ENCODE measurements at regions of chr12 and their contacts with region 1.

Region 1: DNA sequence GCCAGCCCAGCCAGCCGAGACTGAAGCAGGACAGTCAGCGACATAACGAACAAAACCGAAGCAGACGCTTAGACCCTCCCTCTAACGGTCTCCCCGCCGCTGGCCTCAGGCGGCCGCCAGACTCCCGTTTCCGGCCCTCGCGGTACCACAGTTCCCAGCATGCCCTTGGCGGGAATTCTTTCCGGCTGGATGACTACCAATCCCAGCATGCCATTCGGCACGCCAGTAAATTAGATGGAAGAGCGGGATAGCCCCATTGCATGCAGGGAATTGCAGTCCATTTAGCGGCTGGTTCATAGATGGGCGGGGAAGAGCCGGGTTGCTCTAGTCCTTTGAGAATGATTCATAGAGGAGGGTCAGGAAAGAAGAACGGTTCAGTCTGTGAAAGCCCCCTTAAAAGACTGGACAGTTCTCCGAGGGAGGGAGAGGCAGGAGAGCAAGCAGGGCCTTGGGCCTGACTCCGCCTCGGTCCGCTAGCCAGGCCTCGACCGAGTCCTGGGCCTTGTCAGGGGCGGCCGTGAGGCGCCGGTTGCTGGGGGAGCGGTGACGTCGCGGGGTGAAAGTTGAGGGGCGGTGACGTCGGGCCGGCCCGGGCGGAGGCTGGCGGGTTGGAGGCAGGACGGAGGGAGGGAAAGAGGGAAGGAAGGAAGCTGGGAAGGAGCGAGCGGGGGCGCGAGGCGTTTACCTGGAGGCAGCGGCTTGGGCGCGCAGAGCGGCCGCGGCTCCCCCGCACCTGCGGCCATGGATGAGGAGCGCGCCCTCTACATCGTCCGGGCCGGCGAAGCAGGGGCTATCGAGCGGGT is at the start of gene RIC8B:
- DNase-seq: peak; percentile 95
- ATAC-seq: peak; percentile 97
- total RNA-seq, gene RIC8B: 25.4 TPM

Region 2: GRCh38 chr12:106044773-106045172 is 729.4 kb before region 1 on chr12:
- intact Hi-C with region 1: no loop called
- DNase-seq: no peak
- ATAC-seq: no peak

Region 3: GRCh38 chr12:106841510-106842302 is 67.5 kb after region 1 on chr12:
- intact Hi-C with region 1: loop called (anchors 5 kb)
- DNase-seq: no peak
- ATAC-seq: peak; percentile 86

Region 4: GRCh38 chr12:106955377-106956047 is 181.3 kb after region 1 on chr12 and contains the start of gene TMEM263:
- intact Hi-C with region 1: loop called (anchors 10 kb)
- DNase-seq: peak; percentile 97
- ATAC-seq: peak; percentile 96
- total RNA-seq, gene TMEM263: 28.8 TPM

Measured in Right ventricle myocardium superior (tissue), 1 donor.